Activated CD4-positive, alpha-beta T cell treated with anti-CD3 and anti-CD28 coated beads for 36 hours (primary cell): ENCODE measurements at regions of chr12 and their contacts with region 1.

Region 1: DNA sequence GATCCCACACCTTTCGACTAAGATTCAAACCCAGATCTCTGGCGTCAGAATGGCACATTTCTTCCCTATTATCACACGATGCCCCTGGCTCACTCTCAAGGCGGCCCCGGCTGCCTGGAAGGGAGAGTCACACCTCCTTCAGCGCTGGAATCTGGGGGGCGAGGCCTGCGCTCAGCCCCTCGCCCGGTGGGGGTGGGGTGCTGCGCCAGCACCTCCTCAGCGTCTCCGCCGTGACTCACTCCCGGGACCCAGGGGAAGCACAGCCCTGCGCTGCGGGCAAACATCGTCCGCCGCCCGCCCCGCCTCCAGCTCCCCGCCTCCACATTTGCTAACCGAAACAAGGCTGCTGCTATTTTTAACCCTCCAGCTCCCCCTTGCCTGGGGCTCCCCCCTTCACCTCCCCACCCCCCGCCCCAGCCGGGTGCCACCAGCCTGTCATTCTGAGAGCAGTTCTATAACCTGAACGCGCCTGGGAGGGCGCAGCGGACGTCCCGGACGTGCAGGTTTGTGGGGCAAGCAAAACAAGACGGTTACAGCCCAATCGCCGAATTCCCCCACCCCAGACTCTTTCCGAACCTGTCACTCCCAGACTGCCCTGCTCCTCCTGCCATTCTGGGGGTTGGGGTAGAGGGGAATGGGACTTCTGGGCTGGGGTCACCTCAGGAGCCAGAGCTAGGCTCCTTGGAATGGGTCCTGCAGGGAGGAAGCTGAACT is 6.7 kb downstream of the HDAC7 start:
- DNase-seq: peak; percentile 98
- ATAC-seq: peak; percentile 59
- H3K4me3 Mint-ChIP-seq: peak overlapping the region; percentile 94
- H3K27ac Mint-ChIP-seq: peak overlapping the region; percentile 98
- H3K4me1 Mint-ChIP-seq: peaks cover 81% of the 10 kb centered on the region
- H3K27me3 Mint-ChIP-seq: no peaks in the 10 kb centered on the region

Region 2: DNA sequence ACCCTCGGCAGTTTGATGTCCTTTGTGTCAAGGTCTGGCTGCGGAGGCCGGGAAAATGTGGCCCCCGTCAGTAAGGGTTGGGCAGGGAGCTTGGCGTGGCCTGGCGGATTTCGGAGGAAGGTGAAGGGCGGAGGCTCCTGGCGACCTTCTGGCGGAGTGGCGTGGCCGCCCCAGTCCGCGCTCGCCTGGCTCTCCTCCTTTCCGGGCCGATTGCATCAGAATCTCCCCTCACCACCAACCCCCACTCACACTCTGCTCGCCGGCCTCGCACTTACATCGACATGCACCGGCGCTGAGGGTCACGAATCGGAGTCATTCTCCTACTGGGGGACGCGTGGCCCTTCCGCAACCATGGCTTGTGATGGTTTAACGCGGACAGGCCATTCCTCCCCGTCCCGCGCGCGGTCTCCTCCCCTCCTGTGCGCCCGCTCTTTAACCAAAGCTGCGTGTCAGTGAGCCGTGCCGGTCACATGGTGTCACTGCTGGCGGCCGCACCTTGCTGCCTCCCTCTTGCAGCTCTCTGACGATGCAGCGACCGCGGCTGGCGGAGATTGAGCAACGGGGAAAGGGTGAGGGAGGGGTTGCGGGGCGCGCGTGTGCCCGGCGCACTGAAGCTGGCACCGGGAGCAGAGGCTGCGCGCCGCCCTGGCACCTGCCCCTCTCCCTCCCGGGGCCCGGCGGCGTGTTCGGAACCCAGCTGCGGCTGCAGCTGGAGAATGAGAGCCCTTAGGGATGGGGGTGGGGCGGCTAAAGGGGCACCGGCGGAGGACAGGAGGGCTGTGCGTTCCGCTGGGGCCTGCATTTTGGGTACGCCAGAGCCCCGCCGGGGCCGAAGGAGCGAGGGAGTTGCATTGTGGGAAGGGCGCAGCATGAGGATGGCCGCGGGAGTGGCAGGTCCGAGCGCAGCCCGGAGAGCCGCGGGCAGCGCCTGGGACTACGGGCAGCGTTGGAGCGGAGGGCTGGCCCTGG is 1544.1 kb before region 1 on chr12 and contains the start of gene SLC38A1:
- CTCF ChIA-PET with region 1: no interaction called
- POLR2A ChIA-PET with region 1: no interaction called
- intact Hi-C with region 1: loop called in 1 of 2 experiments (anchors 5 kb)
- DNase-seq: peak; percentile 94
- ATAC-seq: peak; percentile 61
- H3K4me3 Mint-ChIP-seq: no peak within 1 kb of the TSS
- H3K27ac Mint-ChIP-seq: no peak within 1 kb of the TSS
- H3K4me1 Mint-ChIP-seq: peaks cover 30% of the 10 kb centered on the region
- H3K27me3 Mint-ChIP-seq: no peaks in the 10 kb centered on the region
- total RNA-seq, gene SLC38A1: 167 to 180 TPM

Region 3: GRCh38 chr12:47276621-47277309 is 536.2 kb before region 1 on chr12:
- CTCF ChIA-PET with region 1: no interaction called
- POLR2A ChIA-PET with region 1: no interaction called
- intact Hi-C with region 1: loop called in 1 of 2 experiments (anchors 10 kb)
- DNase-seq: peak; percentile 69
- ATAC-seq: peak; percentile 77
- H3K4me3 Mint-ChIP-seq: peak overlapping the region; percentile 12
- H3K27ac Mint-ChIP-seq: peak overlapping the region; percentile 88
- H3K4me1 Mint-ChIP-seq: peaks cover 87% of the 10 kb centered on the region
- H3K27me3 Mint-ChIP-seq: no peaks in the 10 kb centered on the region

Region 4: GRCh38 chr12:47742253-47742825 is 70.6 kb before region 1 on chr12:
- CTCF ChIA-PET with region 1: interaction called, 12 read pairs
- POLR2A ChIA-PET with region 1: no interaction called
- intact Hi-C with region 1: no loop called
- DNase-seq: peak; percentile 88
- ATAC-seq: peak; percentile 59
- H3K4me3 Mint-ChIP-seq: no peak overlapping the region
- H3K27ac Mint-ChIP-seq: no peak overlapping the region
- H3K4me1 Mint-ChIP-seq: peaks cover 17% of the 10 kb centered on the region
- H3K27me3 Mint-ChIP-seq: peaks cover 2% of the 10 kb centered on the region

Region 5: GRCh38 chr12:47828608-47829536 is 15.9 kb after region 1 on chr12:
- CTCF ChIA-PET with region 1: interaction called, 303 read pairs
- POLR2A ChIA-PET with region 1: interaction called, 215 read pairs
- intact Hi-C with region 1: loop called (anchors 1 kb)
- DNase-seq: peak; percentile 55
- ATAC-seq: no peak
- H3K4me3 Mint-ChIP-seq: peak overlapping the region; percentile 71
- H3K27ac Mint-ChIP-seq: peak overlapping the region; percentile 92
- H3K4me1 Mint-ChIP-seq: peaks cover 91% of the 10 kb centered on the region
- H3K27me3 Mint-ChIP-seq: no peaks in the 10 kb centered on the region

Region 6: GRCh38 chr12:47904713-47905310 is 91.9 kb after region 1 on chr12 and contains the start of gene VDR:
- CTCF ChIA-PET with region 1: no interaction called
- POLR2A ChIA-PET with region 1: interaction called, 4 read pairs
- intact Hi-C with region 1: loop called (anchors 2 to 5 kb)
- DNase-seq: peak; percentile 88
- ATAC-seq: peak; percentile 76
- H3K4me3 Mint-ChIP-seq: peak within 1 kb of the TSS; percentile 94
- H3K27ac Mint-ChIP-seq: peak within 1 kb of the TSS; percentile 92
- H3K4me1 Mint-ChIP-seq: peaks cover 45% of the 10 kb centered on the region
- H3K27me3 Mint-ChIP-seq: peaks cover 20% of the 10 kb centered on the region
- total RNA-seq, gene VDR: 108 to 124 TPM

Region 7: GRCh38 chr12:48681738-48682532 is 869.0 kb after region 1 on chr12 and contains the start of gene KANSL2:
- CTCF ChIA-PET with region 1: no interaction called
- POLR2A ChIA-PET with region 1: no interaction called
- intact Hi-C with region 1: loop called in 1 of 2 experiments (anchors 10 kb)
- DNase-seq: peak; percentile 99
- ATAC-seq: peak; percentile 96
- H3K4me3 Mint-ChIP-seq: peak within 1 kb of the TSS; percentile 87
- H3K27ac Mint-ChIP-seq: peak within 1 kb of the TSS; percentile 91
- H3K4me1 Mint-ChIP-seq: peaks cover 41% of the 10 kb centered on the region
- H3K27me3 Mint-ChIP-seq: no peaks in the 10 kb centered on the region
- total RNA-seq, gene KANSL2: 44.0 to 59.8 TPM